Posterior vena cava (tissue), 2 donors: ENCODE measurements at regions of chr1 and their contacts with region 1.

Region 1: GRCh38 chr1:2412519-2413233 is at the start of gene PEX10:
- DNase-seq: peak; percentile 99
- total RNA-seq, gene PEX10: 10.9 to 13.1 TPM

Region 2: DNA sequence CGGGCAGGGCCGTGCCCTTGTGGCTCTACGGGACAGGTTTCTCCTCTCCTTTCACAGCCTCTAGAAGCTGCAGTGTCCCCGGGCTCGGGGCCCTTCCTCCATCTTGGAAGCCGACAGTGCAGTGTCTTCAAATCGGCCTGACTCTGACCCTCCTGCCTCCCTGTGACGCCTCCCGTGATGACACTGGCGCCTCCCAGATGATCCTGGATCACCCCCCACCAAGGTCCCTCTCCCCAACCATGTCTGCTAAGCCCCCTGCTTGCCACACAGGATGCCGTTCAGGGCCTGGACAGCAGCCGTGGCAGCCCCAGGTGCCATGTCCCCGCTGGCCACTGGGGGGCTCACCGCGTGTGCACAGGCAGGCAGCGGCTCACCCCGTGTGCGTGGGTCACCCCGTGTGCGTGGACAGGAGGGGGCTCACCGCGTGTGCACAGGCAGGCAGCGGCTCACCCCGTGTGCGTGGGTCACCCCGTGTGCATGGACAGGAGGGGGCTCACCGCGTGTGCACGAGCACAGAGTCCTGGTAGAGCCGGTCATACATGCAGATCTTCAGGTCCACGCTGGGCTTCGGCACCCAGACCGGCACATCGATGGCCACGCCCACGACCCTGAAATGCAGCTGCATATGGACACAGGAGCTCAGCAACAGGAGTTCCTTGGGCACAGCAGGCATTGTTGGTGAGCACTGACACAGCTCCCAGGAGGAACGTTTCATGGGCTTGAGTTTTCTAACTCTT is 468.7 kb before region 1 on chr1:
- intact Hi-C with region 1: no loop called
- DNase-seq: peak; percentile 87

Region 3: GRCh38 chr1:2275796-2276536 is 136.7 kb before region 1 on chr1:
- intact Hi-C with region 1: no loop called
- DNase-seq: no peak

Region 4: DNA sequence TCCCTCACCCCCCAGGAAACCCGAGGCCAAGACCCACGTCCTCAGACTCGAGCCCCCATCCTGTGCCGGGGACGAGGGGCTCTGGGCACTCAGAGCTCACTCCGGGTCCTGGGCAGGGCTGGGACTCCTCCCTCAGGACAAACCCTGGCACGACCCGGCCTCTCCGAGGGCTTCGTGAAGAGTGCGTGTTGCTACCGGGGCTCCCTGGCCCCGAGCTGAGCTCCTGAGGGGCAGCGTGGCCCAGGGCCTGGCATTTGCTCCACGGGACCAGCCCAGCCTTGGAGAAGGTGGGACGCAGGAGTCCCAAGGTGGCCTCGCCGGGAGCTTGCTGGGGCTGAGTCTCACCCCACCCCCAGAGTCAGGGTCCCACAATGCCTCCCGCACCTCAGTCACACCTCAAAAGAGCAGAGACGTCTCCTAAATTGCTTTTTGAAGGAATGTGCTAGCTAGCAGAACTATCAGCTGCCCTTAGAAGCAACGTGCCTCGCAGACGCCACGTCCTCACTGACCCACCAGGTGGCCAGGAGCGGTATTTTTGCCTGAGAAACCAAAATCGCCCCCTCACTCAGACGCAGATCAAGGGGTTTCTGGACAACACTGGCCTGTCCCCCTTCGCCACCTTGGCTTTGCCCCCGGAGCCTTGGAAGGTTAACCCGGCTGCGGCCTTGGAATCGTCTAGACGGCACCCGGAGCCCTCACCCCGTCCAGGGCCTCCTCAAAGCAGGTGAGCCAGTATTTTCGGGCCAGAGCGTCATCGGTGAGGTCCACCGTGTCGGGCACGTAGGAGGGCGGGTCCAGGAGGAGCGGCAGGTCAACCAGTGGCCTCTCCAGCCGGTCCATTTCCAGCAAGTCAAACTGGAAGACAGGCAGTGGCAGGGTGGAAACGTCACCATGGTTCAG is 102.4 kb after region 1 on chr1:
- intact Hi-C with region 1: no loop called
- DNase-seq: no peak

Region 5: DNA sequence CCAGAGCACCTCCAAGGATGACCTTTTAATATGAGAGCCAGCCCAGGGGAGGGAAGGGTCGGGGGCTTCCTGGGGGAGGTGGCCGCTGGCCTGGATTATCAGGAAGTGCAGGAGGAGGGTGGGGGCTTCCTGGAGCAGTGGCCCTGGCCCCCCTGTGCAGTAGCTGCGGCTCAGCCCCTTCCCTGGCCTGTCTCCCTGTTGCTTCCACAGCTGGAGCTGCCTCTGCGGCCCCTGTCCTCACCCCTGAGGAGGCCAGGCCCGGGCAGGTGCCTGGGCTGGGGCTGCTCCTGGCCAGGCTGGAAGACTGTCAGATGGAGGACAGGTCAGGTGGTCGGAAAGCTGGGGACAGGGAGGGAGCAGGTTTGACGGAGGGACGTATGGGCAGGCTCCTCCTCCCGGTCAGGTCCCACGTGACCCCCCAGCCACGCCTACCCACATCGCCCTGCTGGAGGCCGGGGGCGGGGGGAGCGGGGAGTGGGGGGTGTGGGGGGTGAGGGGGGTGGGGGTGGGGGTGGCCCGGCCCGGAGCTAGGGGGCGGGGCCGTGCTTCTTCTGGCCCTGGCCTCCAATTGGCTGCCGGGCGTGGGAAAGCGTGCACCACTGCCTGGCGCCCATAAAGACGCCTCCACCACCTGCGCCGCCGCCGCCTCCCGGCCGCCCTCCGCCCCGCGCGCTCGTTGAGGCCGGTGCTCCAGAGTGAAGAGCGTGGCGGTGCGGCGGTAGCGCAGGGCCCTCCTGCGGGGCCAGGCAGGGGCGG is 133.3 kb after region 1 on chr1:
- intact Hi-C with region 1: loop called (anchors 2 to 5 kb)
- DNase-seq: peak; percentile 96

Region 6: GRCh38 chr1:2778220-2778592 is 365.5 kb after region 1 on chr1:
- intact Hi-C with region 1: loop called in 1 of 2 experiments (anchors 5 kb)
- DNase-seq: no peak